Mammary epithelial cell (primary cell): ENCODE measurements at regions of chr6 and their contacts with region 1.

Region 1: GRCh38 chr6:56772737-56773184 is 130.1 kb upstream of the DST start:
- DNase-seq: peak; percentile 92
- H3K4me3 ChIP-seq: no peak overlapping the region
- H3K27ac ChIP-seq: no peak overlapping the region
- H3K4me1 ChIP-seq: peaks cover 7% of the 10 kb centered on the region
- H3K27me3 ChIP-seq: no peaks in the 10 kb centered on the region
- CTCF ChIP-seq: peak in 1 of 2 donors; percentile 6

Region 2: DNA sequence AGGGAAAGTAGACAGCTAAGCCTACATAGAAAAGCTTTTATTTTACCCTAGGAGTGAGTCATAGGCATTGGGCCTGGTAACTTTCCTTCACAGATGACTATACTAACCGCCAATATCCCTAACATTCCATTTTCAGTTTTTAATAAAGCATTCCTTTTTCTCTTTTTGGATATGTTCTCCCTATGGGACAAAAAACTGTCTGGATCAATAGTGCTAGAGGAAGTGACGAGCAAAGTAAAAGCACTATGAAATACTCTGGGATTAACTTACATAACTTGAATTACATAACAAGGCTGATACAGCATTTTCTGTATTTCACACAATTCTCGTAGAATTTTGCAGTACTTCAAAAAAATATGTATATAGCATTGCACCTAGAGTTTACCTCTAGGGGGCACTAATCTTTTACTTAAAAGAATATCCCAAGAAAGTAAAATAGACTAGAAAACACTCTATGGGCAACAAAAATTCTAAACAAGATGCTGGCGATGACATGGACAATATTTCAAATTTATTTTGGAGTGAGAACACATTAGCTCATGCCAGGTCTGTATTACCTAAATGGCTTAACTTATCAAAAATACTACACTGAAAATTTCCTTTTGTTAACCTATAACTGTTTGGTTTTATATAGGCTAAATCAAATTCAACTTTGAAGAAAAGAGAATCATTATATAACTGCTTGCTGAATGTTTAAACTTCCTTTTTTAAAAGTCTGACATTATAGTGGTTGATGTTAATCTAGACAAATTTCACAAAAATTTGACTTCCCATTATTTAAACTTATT is 63.8 kb before region 1 on chr6:
- CTCF ChIA-PET with region 1: no interaction called
- dilution Hi-C with region 1: no loop called
- in situ Hi-C with region 1: no loop called
- intact Hi-C with region 1: loop called (anchors 1 kb)
- DNase-seq: peak; percentile 68
- H3K4me3 ChIP-seq: peak overlapping the region; percentile 8 to 41 (median 39)
- H3K27ac ChIP-seq: peak overlapping the region; percentile 75
- H3K4me1 ChIP-seq: peaks cover 14% of the 10 kb centered on the region
- H3K27me3 ChIP-seq: no peaks in the 10 kb centered on the region
- CTCF ChIP-seq: peak; percentile 52 to 59

Region 3: GRCh38 chr6:56808871-56809359 is 36.2 kb after region 1 on chr6:
- CTCF ChIA-PET with region 1: no interaction called
- dilution Hi-C with region 1: no loop called
- in situ Hi-C with region 1: no loop called
- intact Hi-C with region 1: loop called (anchors 5 kb)
- DNase-seq: peak; percentile 91
- H3K4me3 ChIP-seq: no peak overlapping the region
- H3K27ac ChIP-seq: peak overlapping the region; percentile 80
- H3K4me1 ChIP-seq: peaks cover 18% of the 10 kb centered on the region
- H3K27me3 ChIP-seq: no peaks in the 10 kb centered on the region
- CTCF ChIP-seq: no peak

Region 4: GRCh38 chr6:56843573-56844349 is 71.0 kb after region 1 on chr6:
- CTCF ChIA-PET with region 1: interaction called, 3 read pairs
- dilution Hi-C with region 1: no loop called
- in situ Hi-C with region 1: no loop called
- intact Hi-C with region 1: loop called (anchors 2 kb)
- DNase-seq: peak; percentile 81
- H3K4me3 ChIP-seq: peak overlapping the region; percentile 70 to 82 (median 73)
- H3K27ac ChIP-seq: peak overlapping the region; percentile 36
- H3K4me1 ChIP-seq: peaks cover 20% of the 10 kb centered on the region
- H3K27me3 ChIP-seq: no peaks in the 10 kb centered on the region
- CTCF ChIP-seq: peak; percentile 49 to 73